ENCODE measurements at regions of chr13 and their contacts with region 1.

Region 1: GRCh38 chr13:98664039-98664438 is 87.1 kb upstream of the STK24 start:
- DNase-seq: peak; percentile 88
- ATAC-seq: peak; percentile 99
- H3K4me3 Mint-ChIP-seq: peak overlapping the region; percentile 2
- H3K27ac Mint-ChIP-seq: peak overlapping the region; percentile 81
- H3K4me1 Mint-ChIP-seq: peaks cover 16% of the 10 kb centered on the region
- H3K27me3 Mint-ChIP-seq: peaks cover 5% of the 10 kb centered on the region

Region 2: DNA sequence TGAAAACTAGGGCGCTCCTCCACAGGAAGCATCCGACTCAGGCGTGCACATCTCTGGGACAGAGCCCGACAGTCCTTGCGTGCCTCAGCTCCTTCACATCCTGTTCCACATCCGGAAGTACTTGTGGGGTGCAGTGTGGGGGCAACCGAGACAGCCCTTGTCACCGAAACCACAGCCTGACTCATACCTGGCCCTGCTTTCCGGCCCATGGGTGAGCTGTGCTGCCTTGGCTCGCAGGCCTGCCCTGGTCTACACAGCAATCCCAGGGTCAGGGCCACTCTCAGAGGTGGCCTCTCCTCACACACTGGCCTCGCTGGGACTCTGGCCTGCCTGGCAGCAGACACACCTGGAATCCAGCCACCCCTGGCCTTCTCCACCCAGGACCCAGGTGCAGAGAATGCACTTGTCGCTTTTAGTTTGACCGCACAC is 187.5 kb before region 1 on chr13:
- CTCF ChIA-PET with region 1: no interaction called
- POLR2A ChIA-PET with region 1: no interaction called
- intact Hi-C with region 1: loop called (anchors 1 kb)
- DNase-seq: peak; percentile 94
- ATAC-seq: peak; percentile 86
- H3K4me3 Mint-ChIP-seq: peak overlapping the region; percentile 63
- H3K27ac Mint-ChIP-seq: peak overlapping the region; percentile 93
- H3K4me1 Mint-ChIP-seq: peaks cover 56% of the 10 kb centered on the region
- H3K27me3 Mint-ChIP-seq: no peaks in the 10 kb centered on the region

Region 3: DNA sequence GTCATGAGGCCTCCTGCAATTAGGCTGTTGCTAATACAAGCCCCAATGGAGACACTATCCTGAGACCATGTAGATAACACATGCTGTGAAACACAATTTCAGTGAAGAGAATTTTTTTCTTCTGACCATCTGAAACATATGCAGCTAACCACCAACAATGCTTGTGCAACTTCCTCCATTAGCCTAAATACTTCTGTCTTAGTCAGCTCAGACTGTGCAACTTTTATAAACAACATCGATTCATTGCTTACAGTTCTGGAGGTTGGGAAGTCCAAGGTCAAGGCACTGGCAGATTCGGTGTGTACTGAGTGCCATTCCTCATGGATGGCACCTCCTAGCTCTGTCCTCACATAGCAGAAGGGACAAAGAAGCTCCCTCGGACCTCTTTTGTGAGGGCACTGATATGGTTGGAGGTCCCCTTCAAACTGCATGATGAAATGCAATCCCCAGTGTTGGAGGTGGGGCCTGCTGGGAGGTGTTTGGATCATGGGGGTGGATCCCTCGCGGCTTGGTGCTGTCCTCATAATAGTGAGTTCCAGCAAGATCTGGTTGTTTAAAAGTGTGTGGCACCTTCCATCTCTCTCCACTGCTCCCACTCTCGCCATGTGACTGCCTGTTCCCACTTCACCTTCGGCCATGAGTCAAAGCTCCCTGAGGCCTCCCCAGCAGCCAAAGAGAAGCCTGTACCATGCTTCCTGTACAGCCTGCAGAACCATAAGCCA is 114.9 kb before region 1 on chr13:
- CTCF ChIA-PET with region 1: interaction called, 3 read pairs
- POLR2A ChIA-PET with region 1: no interaction called
- intact Hi-C with region 1: loop called in 1 of 2 experiments (anchors 1 kb)
- DNase-seq: peak; percentile 35
- ATAC-seq: peak; percentile 28
- H3K4me3 Mint-ChIP-seq: no peak overlapping the region
- H3K27ac Mint-ChIP-seq: peak overlapping the region; percentile 76
- H3K4me1 Mint-ChIP-seq: peaks cover 84% of the 10 kb centered on the region
- H3K27me3 Mint-ChIP-seq: no peaks in the 10 kb centered on the region

Region 4: GRCh38 chr13:98598043-98598442 is 66.0 kb before region 1 on chr13:
- CTCF ChIA-PET with region 1: no interaction called
- POLR2A ChIA-PET with region 1: no interaction called
- intact Hi-C with region 1: loop called in 1 of 2 experiments (anchors 1 kb)
- DNase-seq: no peak
- ATAC-seq: no peak
- H3K4me3 Mint-ChIP-seq: no peak overlapping the region
- H3K27ac Mint-ChIP-seq: peak overlapping the region; percentile 20
- H3K4me1 Mint-ChIP-seq: peaks cover 16% of the 10 kb centered on the region
- H3K27me3 Mint-ChIP-seq: no peaks in the 10 kb centered on the region

Region 5: DNA sequence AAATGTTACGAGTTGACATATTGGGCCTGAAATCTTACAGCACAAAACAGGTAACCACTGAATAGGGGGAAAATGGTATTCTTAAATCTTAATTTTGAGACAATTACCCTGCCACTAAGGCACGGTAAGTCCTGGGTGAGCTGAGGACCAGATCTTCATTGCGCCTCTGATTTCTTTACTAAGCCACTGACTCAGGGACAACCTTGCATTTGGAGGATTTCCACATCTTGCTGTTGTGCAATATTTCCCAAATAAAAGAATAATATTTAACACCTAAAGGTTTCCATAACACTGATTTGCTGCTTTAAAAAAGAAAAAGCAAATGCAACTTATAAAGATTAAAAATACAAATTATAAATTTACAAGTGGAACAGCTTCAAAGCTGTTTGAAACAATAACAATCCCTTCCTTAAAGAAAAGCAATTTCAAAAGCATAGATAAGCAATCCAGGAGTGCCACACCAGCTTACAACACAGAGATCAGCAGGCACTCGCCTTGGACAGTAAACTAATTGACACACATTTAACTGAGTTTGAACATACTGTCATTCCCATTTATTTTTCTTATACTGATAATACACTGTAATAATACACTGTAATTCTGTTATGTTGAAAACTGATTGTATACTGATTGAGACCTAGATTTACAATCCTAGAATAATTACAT is 393.4 kb after region 1 on chr13:
- CTCF ChIA-PET with region 1: no interaction called
- POLR2A ChIA-PET with region 1: no interaction called
- intact Hi-C with region 1: loop called in 1 of 2 experiments (anchors 10 kb)
- DNase-seq: no peak
- ATAC-seq: no peak
- H3K4me3 Mint-ChIP-seq: no peak overlapping the region
- H3K27ac Mint-ChIP-seq: no peak overlapping the region
- H3K4me1 Mint-ChIP-seq: peaks cover 59% of the 10 kb centered on the region
- H3K27me3 Mint-ChIP-seq: no peaks in the 10 kb centered on the region

Measured in activated CD4-positive, alpha-beta T cell treated with anti-CD3 and anti-CD28 coated beads for 36 hours (primary cell).